IMR-90 (cell line): ENCODE measurements at regions of chr9 and their contacts with region 1.

Region 1: GRCh38 chr9:9061627-9062026 is 1262.0 kb upstream of the DMAC1 start:
- DNase-seq: no peak
- ATAC-seq: no peak
- H3K4me3 ChIP-seq: no peak overlapping the region
- H3K27ac ChIP-seq: no peak overlapping the region
- H3K4me1 ChIP-seq: no peaks in the 10 kb centered on the region
- H3K27me3 ChIP-seq: no peaks in the 10 kb centered on the region
- CTCF ChIP-seq: no peak
- POLR2A ChIP-seq: no peak
- RAD21 ChIP-seq: no peak

Region 2: DNA sequence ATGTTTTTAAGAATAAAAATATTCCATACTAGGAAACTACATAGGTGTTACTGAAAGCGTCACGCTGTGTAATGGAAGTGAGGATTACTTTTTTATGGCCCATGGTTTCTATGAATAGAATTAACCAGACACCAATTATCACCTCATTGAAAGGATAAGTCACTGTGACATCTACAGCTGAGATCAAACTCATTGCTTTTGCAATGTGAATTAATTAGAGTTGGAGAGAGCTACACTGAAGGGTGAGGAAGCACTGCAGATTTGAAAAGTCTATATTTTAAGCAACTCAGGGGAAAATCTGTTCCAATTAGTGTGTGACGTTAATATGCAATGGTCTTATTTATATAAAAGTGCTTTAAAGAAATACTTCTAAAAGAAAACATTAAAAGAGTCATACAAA is 38.0 kb after region 1 on chr9:
- CTCF ChIA-PET with region 1: no interaction called
- POLR2A ChIA-PET with region 1: no interaction called
- dilution Hi-C with region 1: no loop called
- in situ Hi-C with region 1: no loop called
- intact Hi-C with region 1: loop called (anchors 5 kb)
- DNase-seq: no peak
- ATAC-seq: no peak
- H3K4me3 ChIP-seq: no peak overlapping the region
- H3K27ac ChIP-seq: no peak overlapping the region
- H3K4me1 ChIP-seq: no peaks in the 10 kb centered on the region
- H3K27me3 ChIP-seq: no peaks in the 10 kb centered on the region
- CTCF ChIP-seq: no peak
- POLR2A ChIP-seq: no peak
- RAD21 ChIP-seq: no peak